Esophagus muscularis mucosa (tissue), 4 donors: ENCODE measurements at regions of chr16 and their contacts with region 1.

Region 1: DNA sequence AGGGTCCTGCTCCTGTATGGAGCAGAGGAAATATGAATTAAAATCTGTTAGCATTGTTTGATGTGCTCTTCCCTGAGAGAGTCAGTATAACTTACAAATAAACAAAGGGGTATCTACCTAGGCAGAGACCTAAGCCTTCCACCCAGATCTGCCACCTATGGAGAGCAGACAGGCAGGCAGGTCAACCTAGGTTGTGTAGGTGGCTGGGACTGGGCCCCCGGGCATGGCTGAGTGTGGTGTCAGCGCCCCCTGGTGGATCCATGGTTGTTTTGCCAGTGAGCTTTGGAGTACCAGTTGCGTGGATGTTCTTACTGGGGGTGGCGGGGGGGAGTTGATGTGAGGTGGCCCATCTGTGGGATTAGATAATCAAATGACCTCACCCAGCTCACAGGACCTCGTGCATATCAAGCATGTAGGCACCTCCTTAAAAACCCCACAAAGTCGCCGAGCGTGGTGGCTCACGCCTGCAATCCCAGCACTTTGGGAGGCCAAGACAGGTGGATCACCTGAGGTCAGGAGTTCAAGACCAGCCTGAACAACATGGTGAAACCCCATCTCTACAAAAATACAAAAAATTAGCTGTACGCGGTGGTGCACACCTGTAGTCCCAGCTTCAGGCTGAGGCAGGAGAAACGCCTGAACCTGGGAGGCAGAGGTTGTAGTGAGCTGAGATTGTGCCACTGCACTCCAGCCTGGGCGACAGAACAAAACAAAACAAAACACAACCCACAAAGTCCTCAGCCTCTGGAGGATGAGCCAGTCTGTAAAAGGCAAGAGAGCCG is 17.6 kb downstream of the DUS2 start:
- DNase-seq: peak; percentile 96
- H3K4me3 ChIP-seq: no peak overlapping the region
- H3K27ac ChIP-seq: no peak overlapping the region
- H3K4me1 ChIP-seq: peaks cover 0 to 10% (median 3%) of the 10 kb centered on the region in 4 donors
- H3K27me3 ChIP-seq: no peaks in the 10 kb centered on the region
- CTCF ChIP-seq: peak; percentile 83 to 88 (median 87)
- EP300 ChIP-seq: no peak
- POLR2A ChIP-seq: no peak

Region 2: DNA sequence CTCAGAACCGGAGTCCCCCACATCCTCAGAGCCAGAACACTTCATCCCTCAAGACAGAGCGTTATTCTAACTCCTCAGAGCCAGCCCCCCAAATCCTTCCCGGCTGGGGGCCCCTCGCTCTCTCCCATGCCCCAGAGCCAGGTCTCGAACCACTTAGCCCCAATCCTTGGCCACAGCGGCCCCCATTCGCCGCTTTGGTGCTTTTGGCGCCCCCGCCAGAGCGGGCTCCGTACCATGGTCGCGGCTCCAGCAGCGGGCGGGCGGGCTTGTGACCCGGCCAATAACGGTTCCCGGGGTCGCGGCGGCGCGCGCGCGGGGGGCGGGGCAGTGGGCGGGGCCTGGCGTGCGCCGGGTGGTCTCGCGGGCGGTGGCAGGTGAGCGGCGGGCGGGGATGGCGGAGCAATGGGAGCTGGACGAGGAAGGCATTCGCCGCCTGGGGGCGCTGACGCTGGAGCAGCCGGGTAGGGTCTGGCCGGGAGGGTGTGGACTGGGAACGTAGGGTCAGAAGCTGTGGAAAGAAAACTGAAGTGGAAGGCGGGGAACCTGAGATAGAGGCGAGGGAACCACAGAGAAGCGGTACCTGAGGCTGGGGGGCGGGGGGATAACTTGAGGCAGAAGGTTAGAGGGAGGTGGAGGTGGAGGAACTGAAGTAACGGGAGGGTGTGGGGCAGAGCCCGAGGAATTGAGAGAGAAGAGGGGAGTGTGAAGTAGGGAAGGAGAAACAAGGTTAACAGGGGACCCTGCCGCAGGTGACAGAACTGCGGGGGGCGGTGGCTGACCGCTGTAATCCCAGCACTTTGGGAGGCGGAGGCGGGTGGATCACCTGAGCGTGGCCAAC is 714.0 kb before region 1 on chr16 and contains the starts of genes KCTD19 and LRRC36:
- intact Hi-C with region 1: no loop called
- DNase-seq: peak; percentile 62
- H3K4me3 ChIP-seq: peak within 1 kb of the TSS; percentile 53 to 69 (median 58)
- H3K27ac ChIP-seq: no peak within 1 kb of the TSS
- H3K4me1 ChIP-seq: peaks cover 6 to 15% (median 14%) of the 10 kb centered on the region in 4 donors
- H3K27me3 ChIP-seq: peaks cover 0 to 40% (median 0%) of the 10 kb centered on the region in 4 donors
- CTCF ChIP-seq: peak; percentile 25 to 52 (median 28)
- EP300 ChIP-seq: no peak
- POLR2A ChIP-seq: no peak
- total RNA-seq, gene KCTD19: not detected
- total RNA-seq, gene LRRC36: 0.33 TPM in 1 of 4 donors, not detected in the others

Region 3: DNA sequence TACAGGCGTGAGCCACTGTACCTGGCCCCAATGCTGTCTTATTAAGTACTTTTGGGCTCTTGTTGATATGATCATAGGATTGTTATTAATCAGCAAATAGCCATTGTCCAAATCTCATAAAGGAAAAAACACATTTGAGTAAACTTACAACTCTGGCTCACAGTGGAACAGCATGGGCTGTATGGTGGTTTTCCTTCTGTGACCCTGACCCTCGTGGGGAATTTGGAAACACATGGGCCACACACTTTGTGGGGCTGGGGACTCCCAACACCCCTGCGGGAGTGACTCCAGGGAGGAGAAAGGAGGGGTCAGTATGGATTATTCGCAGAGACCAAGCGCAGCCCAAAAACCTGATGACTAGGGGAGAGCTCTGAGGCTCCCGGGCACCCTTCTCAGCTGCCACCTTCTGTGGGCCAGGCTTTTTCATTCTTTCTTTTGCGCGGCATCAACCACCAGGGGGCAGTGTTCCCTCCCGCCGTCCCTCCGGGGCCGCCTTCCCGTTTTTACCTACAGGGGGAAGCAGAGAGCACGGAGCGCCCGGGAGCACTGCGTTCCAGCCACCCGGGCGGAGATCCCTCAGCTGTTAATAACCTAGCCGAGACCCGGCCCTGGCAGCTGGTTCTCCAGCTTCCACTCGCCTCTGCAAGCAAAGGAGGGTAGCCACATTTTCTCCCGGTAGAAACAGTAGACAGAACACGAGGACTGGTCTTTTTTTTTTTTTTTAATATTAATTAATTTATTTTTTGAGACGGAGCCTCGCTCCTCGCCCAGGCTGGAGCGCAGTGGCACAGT is 224.3 kb before region 1 on chr16:
- intact Hi-C with region 1: loop called (anchors 5 kb)
- DNase-seq: peak; percentile 95
- H3K4me3 ChIP-seq: peak overlapping the region in 1 of 4 donors; percentile 4
- H3K27ac ChIP-seq: peak overlapping the region in 3 of 4 donors; percentile 10 to 57 (median 36)
- H3K4me1 ChIP-seq: peaks cover 0 to 9% (median 8%) of the 10 kb centered on the region in 4 donors
- H3K27me3 ChIP-seq: no peaks in the 10 kb centered on the region
- CTCF ChIP-seq: peak in 2 of 3 experiments; percentile 100
- EP300 ChIP-seq: no peak
- POLR2A ChIP-seq: no peak

Region 4: GRCh38 chr16:67883872-67884261 is 156.8 kb before region 1 on chr16:
- intact Hi-C with region 1: loop called (anchors 5 kb)
- DNase-seq: no peak
- H3K4me3 ChIP-seq: no peak overlapping the region
- H3K27ac ChIP-seq: peak overlapping the region; percentile 71 to 83 (median 76)
- H3K4me1 ChIP-seq: peaks cover 19 to 42% (median 24%) of the 10 kb centered on the region in 4 donors
- H3K27me3 ChIP-seq: no peaks in the 10 kb centered on the region
- CTCF ChIP-seq: peak; percentile 84 to 96 (median 85)
- EP300 ChIP-seq: no peak
- POLR2A ChIP-seq: no peak

Region 5: DNA sequence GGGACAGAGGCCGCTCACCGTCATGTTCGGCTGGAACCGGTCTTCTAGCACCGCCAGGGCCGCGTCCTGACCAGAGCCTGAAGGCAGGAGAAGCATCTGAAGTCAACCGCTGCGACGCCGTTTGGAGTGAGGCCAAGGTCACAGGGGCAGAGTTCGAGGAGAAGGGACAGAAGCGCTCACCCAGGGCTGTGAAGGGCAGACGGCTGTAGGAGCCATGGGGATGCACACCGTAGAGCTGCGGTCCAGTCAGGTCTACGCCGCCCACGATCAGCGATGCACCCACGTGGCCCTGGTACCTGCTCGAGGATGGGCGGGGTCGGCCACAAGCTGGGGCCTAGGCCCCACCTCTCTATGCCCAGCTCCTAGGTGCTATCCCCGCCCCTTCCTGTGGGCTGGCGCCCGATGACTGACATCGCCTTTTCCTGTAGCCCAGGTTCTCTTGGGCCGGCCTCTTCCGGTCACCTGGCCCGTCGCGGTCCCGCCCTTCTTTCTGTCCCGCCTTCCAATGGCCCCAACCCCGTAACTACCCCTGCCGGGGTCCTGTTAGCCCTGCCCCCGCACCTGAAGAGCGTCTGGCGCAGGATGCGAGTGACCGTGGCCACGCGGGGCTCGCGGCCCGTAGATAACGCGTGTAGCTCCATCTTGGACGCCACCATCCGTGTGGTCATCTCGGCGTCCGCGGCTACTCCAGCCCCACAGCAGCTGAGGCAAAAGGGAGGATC is 105.1 kb before region 1 on chr16:
- intact Hi-C with region 1: no loop called
- DNase-seq: peak; percentile 97
- H3K4me3 ChIP-seq: peak overlapping the region; percentile 73 to 96 (median 88)
- H3K27ac ChIP-seq: peak overlapping the region; percentile 86 to 93 (median 92)
- H3K4me1 ChIP-seq: peaks cover 19 to 41% (median 35%) of the 10 kb centered on the region in 4 donors
- H3K27me3 ChIP-seq: no peaks in the 10 kb centered on the region
- CTCF ChIP-seq: no peak
- EP300 ChIP-seq: no peak
- POLR2A ChIP-seq: peak; percentile 27

Region 6: GRCh38 chr16:67993189-67994039 is 47.3 kb before region 1 on chr16:
- intact Hi-C with region 1: loop called (anchors 5 kb)
- DNase-seq: no peak
- H3K4me3 ChIP-seq: peak overlapping the region; percentile 42 to 55 (median 46)
- H3K27ac ChIP-seq: peak overlapping the region; percentile 45 to 60 (median 49)
- H3K4me1 ChIP-seq: peaks cover 10 to 15% (median 13%) of the 10 kb centered on the region in 4 donors
- H3K27me3 ChIP-seq: no peaks in the 10 kb centered on the region
- CTCF ChIP-seq: peak in 2 of 3 experiments; percentile 97 to 99
- EP300 ChIP-seq: no peak
- POLR2A ChIP-seq: peak; percentile 9